ENCODE measurements at regions of chr1 and their contacts with region 1.

Region 1: DNA sequence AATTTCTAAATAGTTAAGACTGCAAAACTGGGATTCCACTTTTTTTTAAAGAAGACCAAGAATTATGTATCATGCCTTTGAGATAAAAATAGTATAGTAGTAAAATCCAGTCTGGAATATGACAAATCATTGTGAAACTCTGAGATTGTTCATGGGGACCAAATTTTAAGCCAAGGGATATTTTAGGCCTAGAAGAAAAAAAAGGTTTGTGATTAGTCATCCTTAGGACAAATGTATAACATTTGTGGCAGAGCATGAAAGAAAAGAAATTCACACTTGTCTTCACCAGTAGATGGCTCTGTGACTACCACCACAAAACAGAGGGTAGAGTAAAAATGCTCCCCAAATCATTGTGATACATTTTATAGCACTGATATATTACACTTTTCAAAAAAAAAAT is 226.1 kb downstream of the KCTD3 start:
- DNase-seq: no peak
- H3K4me3 ChIP-seq: no peak overlapping the region
- H3K27ac ChIP-seq: no peak overlapping the region
- H3K4me1 ChIP-seq: no peaks in the 10 kb centered on the region
- H3K27me3 ChIP-seq: no peaks in the 10 kb centered on the region
- CTCF ChIP-seq: no peak
- POLR2A ChIP-seq: no peak

Region 2: GRCh38 chr1:215650446-215651149 is 142.6 kb before region 1 on chr1:
- intact Hi-C with region 1: loop called in 1 of 2 experiments (anchors 5 kb)
- DNase-seq: no peak
- H3K4me3 ChIP-seq: no peak overlapping the region
- H3K27ac ChIP-seq: no peak overlapping the region
- H3K4me1 ChIP-seq: no peaks in the 10 kb centered on the region
- H3K27me3 ChIP-seq: no peaks in the 10 kb centered on the region
- CTCF ChIP-seq: no peak
- POLR2A ChIP-seq: no peak